CD4-positive, alpha-beta memory T cell (primary cell): ENCODE measurements at regions of chr19 and their contacts with region 1.

Region 1: GRCh38 chr19:54137086-54137921 is at the start of gene CNOT3:
- DNase-seq: peak; percentile 99 to 100 (median 100)
- H3K4me3 ChIP-seq: peak within 1 kb of the TSS; percentile 73 to 87
- H3K4me3 Mint-ChIP-seq: peak within 1 kb of the TSS; percentile 89 to 93 (median 90)
- H3K27ac ChIP-seq: peak within 1 kb of the TSS; percentile 91
- H3K27ac Mint-ChIP-seq: peak within 1 kb of the TSS; percentile 91 to 94 (median 94)
- H3K4me1 ChIP-seq: peaks cover 43% of the 10 kb centered on the region
- H3K4me1 Mint-ChIP-seq: peaks cover 29 to 56% (median 43%) of the 10 kb centered on the region in 4 donors
- H3K27me3 ChIP-seq: no peaks in the 10 kb centered on the region
- H3K27me3 Mint-ChIP-seq: no peaks in the 10 kb centered on the region
- total RNA-seq, gene CNOT3: 80.0 to 82.3 TPM

Region 2: DNA sequence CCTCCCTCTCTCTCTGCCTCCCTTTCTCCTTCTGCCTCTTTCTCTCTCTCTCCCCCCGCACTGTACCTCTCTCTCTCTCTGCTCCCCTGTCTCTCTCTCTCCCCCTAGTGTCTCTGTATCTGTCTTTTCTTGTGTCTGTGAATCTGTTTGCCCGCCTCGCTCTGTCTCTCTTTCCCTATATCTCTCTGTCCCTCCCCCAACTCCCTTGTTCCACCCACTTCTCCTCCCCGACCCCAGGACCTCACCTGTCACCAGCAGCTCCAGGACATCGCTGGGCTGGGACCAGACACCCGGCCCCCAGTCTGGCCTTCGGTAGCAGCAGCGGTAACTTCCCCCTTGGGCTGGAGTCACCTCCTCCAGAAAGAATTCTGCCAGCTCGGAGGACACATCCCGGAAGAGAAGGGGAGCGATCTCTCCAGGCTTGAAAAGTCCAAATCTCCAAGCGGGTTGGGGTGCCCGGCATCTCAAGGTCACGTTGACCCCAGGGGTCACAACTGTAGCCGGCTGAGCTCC is 40.6 kb before region 1 on chr19:
- CTCF ChIA-PET with region 1: interaction called, 5 read pairs
- POLR2A ChIA-PET with region 1: interaction called, 29 read pairs
- intact Hi-C with region 1: no loop called
- DNase-seq: peak in 4 of 5 donors; percentile 30 to 50 (median 43)
- H3K4me3 ChIP-seq: no peak overlapping the region
- H3K4me3 Mint-ChIP-seq: peak overlapping the region; percentile 29 to 87 (median 62)
- H3K27ac ChIP-seq: no peak overlapping the region
- H3K27ac Mint-ChIP-seq: peak overlapping the region; percentile 45 to 91 (median 82)
- H3K4me1 ChIP-seq: peaks cover 13% of the 10 kb centered on the region
- H3K4me1 Mint-ChIP-seq: peaks cover 8 to 20% (median 10%) of the 10 kb centered on the region in 4 donors
- H3K27me3 ChIP-seq: no peaks in the 10 kb centered on the region
- H3K27me3 Mint-ChIP-seq: peaks cover 6 to 7% of the 10 kb centered on the region in 2 donors

Region 3: GRCh38 chr19:54115109-54116063 is 21.9 kb before region 1 on chr19 and contains the starts of genes PRPF31 and TFPT:
- CTCF ChIA-PET with region 1: interaction called, 10 read pairs
- POLR2A ChIA-PET with region 1: interaction called, 113 read pairs
- intact Hi-C with region 1: loop called (anchors 1 kb)
- DNase-seq: peak; percentile 97 to 98 (median 97)
- H3K4me3 ChIP-seq: peak within 1 kb of the TSS; percentile 80 to 81
- H3K4me3 Mint-ChIP-seq: peak within 1 kb of the TSS; percentile 86 to 99 (median 95)
- H3K27ac ChIP-seq: peak within 1 kb of the TSS; percentile 75
- H3K27ac Mint-ChIP-seq: peak within 1 kb of the TSS; percentile 91 to 97 (median 95)
- H3K4me1 ChIP-seq: peaks cover 27% of the 10 kb centered on the region
- H3K4me1 Mint-ChIP-seq: peaks cover 22 to 44% (median 28%) of the 10 kb centered on the region in 4 donors
- H3K27me3 ChIP-seq: no peaks in the 10 kb centered on the region
- H3K27me3 Mint-ChIP-seq: peaks cover 0 to 2% of the 10 kb centered on the region in 2 donors
- total RNA-seq, gene PRPF31: 77.6 to 80.0 TPM
- total RNA-seq, gene TFPT: 17.2 to 19.0 TPM

Region 4: GRCh38 chr19:54159352-54160181 is 22.3 kb after region 1 on chr19 and contains the start of gene LENG1:
- CTCF ChIA-PET with region 1: interaction called, 10 read pairs
- POLR2A ChIA-PET with region 1: interaction called, 131 read pairs
- intact Hi-C with region 1: loop called (anchors 1 kb)
- DNase-seq: peak; percentile 97 to 100 (median 100)
- H3K4me3 ChIP-seq: peak within 1 kb of the TSS; percentile 61 to 99
- H3K4me3 Mint-ChIP-seq: peak within 1 kb of the TSS; percentile 99 to 100 (median 100)
- H3K27ac ChIP-seq: peak within 1 kb of the TSS; percentile 78
- H3K27ac Mint-ChIP-seq: peak within 1 kb of the TSS; percentile 93 to 100 (median 100)
- H3K4me1 ChIP-seq: peaks cover 75% of the 10 kb centered on the region
- H3K4me1 Mint-ChIP-seq: peaks cover 39 to 85% (median 58%) of the 10 kb centered on the region in 4 donors
- H3K27me3 ChIP-seq: no peaks in the 10 kb centered on the region
- H3K27me3 Mint-ChIP-seq: no peaks in the 10 kb centered on the region
- total RNA-seq, gene LENG1: 19.6 to 22.7 TPM

Region 5: DNA sequence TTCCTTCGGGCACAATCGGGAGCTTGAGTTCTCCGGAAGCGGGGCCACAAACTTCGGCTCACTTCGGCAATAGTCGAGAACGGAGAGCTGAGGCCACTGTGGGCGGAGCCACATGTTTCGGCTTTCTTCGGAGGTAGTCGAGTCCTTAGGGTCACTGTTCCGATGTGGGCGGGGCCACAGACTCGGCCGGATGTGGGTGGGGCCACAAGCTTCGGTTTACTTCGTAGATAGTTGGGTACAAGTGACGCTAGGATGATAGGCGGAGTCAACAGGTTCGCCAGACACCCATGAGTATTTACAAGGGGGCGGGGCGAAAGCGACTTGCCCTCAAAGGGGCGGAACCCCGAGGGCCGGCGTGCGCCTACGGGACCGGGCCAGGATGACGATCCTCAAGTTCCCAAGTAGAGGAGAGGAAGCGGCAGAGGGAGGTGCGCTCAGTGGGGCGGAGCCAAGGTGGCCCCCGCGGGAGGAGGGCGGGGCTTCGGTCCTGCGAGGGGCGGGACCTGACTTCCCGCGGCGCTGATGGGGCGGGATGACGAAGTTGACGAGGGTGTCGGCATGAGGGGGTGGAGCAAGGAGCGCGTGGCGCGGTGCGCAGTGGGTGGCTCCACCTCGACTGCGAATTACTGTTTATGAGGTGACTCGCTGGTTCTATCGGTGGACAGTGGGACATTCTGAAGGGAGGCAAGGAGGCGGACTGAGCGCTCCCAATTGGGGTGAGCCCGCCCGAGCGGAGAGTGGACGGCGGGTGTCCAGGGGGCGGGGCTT is 52.6 kb after region 1 on chr19:
- CTCF ChIA-PET with region 1: interaction called, 4 read pairs
- POLR2A ChIA-PET with region 1: interaction called, 73 read pairs
- intact Hi-C with region 1: loop called (anchors 1 kb)
- DNase-seq: peak; percentile 100
- H3K4me3 ChIP-seq: peak overlapping the region; percentile 57 to 76
- H3K4me3 Mint-ChIP-seq: peak overlapping the region; percentile 90 to 99 (median 96)
- H3K27ac ChIP-seq: peak overlapping the region; percentile 99
- H3K27ac Mint-ChIP-seq: peak overlapping the region; percentile 94 to 100 (median 99)
- H3K4me1 ChIP-seq: peaks cover 30% of the 10 kb centered on the region
- H3K4me1 Mint-ChIP-seq: peaks cover 15 to 54% (median 32%) of the 10 kb centered on the region in 4 donors
- H3K27me3 ChIP-seq: no peaks in the 10 kb centered on the region
- H3K27me3 Mint-ChIP-seq: no peaks in the 10 kb centered on the region

Region 6: DNA sequence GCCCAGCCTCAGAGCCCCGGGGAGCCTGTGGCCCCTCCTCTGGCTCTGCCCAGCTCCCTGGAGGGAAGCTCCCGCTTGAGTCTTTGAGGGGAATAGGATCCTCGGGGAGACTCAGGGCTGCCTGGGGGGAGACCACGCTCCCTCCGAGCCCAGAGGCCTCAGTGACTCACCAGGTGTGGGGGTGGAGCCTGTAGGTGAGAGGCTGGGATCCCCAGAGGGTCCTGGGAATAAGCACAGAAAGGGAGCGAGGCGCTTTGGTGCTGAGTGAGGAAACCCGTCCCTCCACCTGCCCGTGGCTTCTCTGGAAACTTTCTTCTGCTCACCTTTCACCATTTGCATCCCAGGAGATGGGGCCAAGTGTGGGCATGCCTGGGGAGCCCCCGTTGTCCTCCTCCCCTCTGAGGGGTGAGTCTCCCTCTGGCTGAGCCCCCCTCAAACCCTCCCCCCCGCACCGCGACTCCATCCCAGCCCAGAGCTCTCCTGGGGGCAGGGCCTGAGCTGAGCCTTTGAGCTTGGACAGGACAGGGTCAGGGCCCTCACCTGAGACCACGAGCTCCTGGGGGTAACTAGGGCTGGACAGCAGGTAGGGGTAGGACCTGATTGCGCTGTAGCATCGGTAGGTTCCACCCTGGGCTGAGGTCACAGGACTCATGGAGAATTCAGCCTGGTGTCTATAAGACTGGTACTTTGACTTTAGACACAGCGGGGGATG is 117.0 kb after region 1 on chr19:
- CTCF ChIA-PET with region 1: no interaction called
- POLR2A ChIA-PET with region 1: no interaction called
- intact Hi-C with region 1: no loop called
- DNase-seq: no peak
- H3K4me3 ChIP-seq: no peak overlapping the region
- H3K4me3 Mint-ChIP-seq: no peak overlapping the region
- H3K27ac ChIP-seq: no peak overlapping the region
- H3K27ac Mint-ChIP-seq: no peak overlapping the region
- H3K4me1 ChIP-seq: no peaks in the 10 kb centered on the region
- H3K4me1 Mint-ChIP-seq: no peaks in the 10 kb centered on the region
- H3K27me3 ChIP-seq: no peaks in the 10 kb centered on the region
- H3K27me3 Mint-ChIP-seq: peaks cover 7 to 13% of the 10 kb centered on the region in 2 donors

Region 7: DNA sequence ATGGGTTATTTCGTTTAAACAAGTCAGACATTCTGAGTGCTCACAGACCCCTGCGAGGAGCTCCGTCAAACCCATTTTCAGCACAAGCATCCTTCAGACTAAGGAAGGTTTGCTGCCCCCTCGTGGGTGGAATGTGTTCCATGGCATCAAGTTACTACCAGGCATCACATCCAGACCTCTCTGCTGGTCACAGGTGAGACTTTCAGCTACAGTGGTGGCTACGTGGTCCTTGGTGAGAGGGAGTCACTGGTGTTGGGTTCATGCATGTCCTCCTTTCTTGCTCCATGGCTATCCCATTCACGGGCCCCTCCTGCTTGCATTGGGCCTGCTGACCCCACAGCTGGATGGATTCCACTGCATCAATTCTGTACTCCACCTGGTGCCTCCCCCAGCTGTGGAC is 128.8 kb after region 1 on chr19:
- CTCF ChIA-PET with region 1: interaction called, 15 read pairs
- POLR2A ChIA-PET with region 1: no interaction called
- intact Hi-C with region 1: no loop called
- DNase-seq: peak; percentile 42 to 67 (median 50)
- H3K4me3 ChIP-seq: no peak overlapping the region
- H3K4me3 Mint-ChIP-seq: peak overlapping the region in 1 of 8 donors; percentile 52
- H3K27ac ChIP-seq: no peak overlapping the region
- H3K27ac Mint-ChIP-seq: no peak overlapping the region
- H3K4me1 ChIP-seq: no peaks in the 10 kb centered on the region
- H3K4me1 Mint-ChIP-seq: peaks cover 0 to 2% (median 0%) of the 10 kb centered on the region in 4 donors
- H3K27me3 ChIP-seq: no peaks in the 10 kb centered on the region
- H3K27me3 Mint-ChIP-seq: peaks cover 6 to 22% of the 10 kb centered on the region in 2 donors